CD4-positive, alpha-beta memory T cell (primary cell): ENCODE measurements at regions of chr9 and their contacts with region 1.

Region 1: DNA sequence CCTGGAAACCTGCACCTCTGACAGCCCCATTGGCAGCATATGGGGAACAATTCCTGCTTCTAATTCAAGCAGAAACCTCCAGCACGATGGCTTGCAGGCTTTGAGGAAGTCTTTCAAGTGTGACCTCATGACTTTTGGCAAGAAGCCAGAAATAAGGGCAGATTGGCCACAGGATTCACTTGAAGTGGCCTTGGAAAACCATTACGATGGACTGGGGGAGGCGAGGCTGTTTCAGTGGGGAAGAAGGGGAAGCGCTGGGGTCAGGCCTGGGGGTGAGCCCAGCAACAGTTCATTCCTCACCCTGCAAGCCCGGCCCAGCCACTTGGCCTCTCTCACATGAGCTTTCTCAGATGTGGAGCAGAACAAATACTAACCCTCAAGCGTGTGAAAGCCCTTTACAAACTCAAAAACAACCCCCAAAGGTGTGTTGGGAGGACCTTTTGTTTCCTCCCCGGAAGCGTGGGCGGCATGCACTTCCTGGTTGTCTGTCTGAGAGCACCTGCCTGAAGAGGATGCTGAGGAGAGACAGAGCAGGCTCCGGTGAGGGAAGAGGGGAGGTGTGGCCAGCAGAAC is 26.9 kb upstream of the EEIG1 start:
- DNase-seq: peak; percentile 90 to 97 (median 92)
- H3K4me3 ChIP-seq: peak overlapping the region in 1 of 2 donors; percentile 29
- H3K4me3 Mint-ChIP-seq: peak overlapping the region; percentile 75 to 93 (median 82)
- H3K27ac ChIP-seq: peak overlapping the region; percentile 46
- H3K27ac Mint-ChIP-seq: peak overlapping the region; percentile 94 to 100 (median 97)
- H3K4me1 ChIP-seq: peaks cover 79% of the 10 kb centered on the region
- H3K4me1 Mint-ChIP-seq: peaks cover 33 to 90% (median 61%) of the 10 kb centered on the region in 4 donors
- H3K27me3 ChIP-seq: no peaks in the 10 kb centered on the region
- H3K27me3 Mint-ChIP-seq: no peaks in the 10 kb centered on the region

Region 2: DNA sequence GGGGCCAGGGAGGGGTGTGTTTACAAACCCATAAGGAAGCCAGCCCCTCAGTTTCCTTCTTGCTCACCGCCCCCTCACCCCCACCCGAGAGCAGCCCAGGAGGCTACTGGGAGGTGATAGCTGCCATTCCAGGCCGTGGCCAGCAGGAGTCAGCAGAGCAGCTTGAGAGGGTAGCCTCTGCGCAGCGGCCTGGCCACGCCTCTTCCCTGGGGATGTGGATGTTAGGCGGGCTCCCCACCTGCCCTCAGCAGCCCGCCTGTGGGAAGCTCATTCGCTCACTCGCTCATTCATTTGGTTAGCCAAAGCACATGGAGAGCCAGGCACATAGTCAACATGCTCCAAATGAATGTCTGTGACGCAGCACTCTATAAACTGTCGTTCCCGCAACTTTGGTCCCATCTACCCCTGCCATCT is 63.9 kb before region 1 on chr9:
- CTCF ChIA-PET with region 1: interaction called, 12 read pairs
- POLR2A ChIA-PET with region 1: interaction called, 11 read pairs
- intact Hi-C with region 1: no loop called
- DNase-seq: peak; percentile 66 to 76 (median 72)
- H3K4me3 ChIP-seq: no peak overlapping the region
- H3K4me3 Mint-ChIP-seq: no peak overlapping the region
- H3K27ac ChIP-seq: no peak overlapping the region
- H3K27ac Mint-ChIP-seq: peak overlapping the region; percentile 78 to 93 (median 88)
- H3K4me1 ChIP-seq: peaks cover 30% of the 10 kb centered on the region
- H3K4me1 Mint-ChIP-seq: peaks cover 16 to 50% (median 23%) of the 10 kb centered on the region in 4 donors
- H3K27me3 ChIP-seq: no peaks in the 10 kb centered on the region
- H3K27me3 Mint-ChIP-seq: no peaks in the 10 kb centered on the region

Region 3: GRCh38 chr9:127970401-127971313 is 37.0 kb before region 1 on chr9:
- CTCF ChIA-PET with region 1: interaction called, 3 read pairs
- POLR2A ChIA-PET with region 1: interaction called, 294 read pairs
- intact Hi-C with region 1: loop called (anchors 1 kb)
- DNase-seq: peak; percentile 72 to 89 (median 73)
- H3K4me3 ChIP-seq: peak overlapping the region; percentile 61 to 76
- H3K4me3 Mint-ChIP-seq: peak overlapping the region; percentile 78 to 98 (median 93)
- H3K27ac ChIP-seq: peak overlapping the region; percentile 78
- H3K27ac Mint-ChIP-seq: peak overlapping the region; percentile 81 to 99 (median 97)
- H3K4me1 ChIP-seq: peaks cover 100% of the 10 kb centered on the region
- H3K4me1 Mint-ChIP-seq: peaks cover 73 to 100% (median 87%) of the 10 kb centered on the region in 4 donors
- H3K27me3 ChIP-seq: no peaks in the 10 kb centered on the region
- H3K27me3 Mint-ChIP-seq: no peaks in the 10 kb centered on the region

Region 4: GRCh38 chr9:128020692-128021091 is 13.0 kb after region 1 on chr9:
- CTCF ChIA-PET with region 1: interaction called, 28 read pairs
- POLR2A ChIA-PET with region 1: interaction called, 313 read pairs
- intact Hi-C with region 1: no loop called
- DNase-seq: no peak
- H3K4me3 ChIP-seq: no peak overlapping the region
- H3K4me3 Mint-ChIP-seq: peak overlapping the region in 1 of 8 donors; percentile 77
- H3K27ac ChIP-seq: no peak overlapping the region
- H3K27ac Mint-ChIP-seq: peak overlapping the region; percentile 31 to 100 (median 94)
- H3K4me1 ChIP-seq: peaks cover 55% of the 10 kb centered on the region
- H3K4me1 Mint-ChIP-seq: peaks cover 44 to 71% (median 52%) of the 10 kb centered on the region in 4 donors
- H3K27me3 ChIP-seq: no peaks in the 10 kb centered on the region
- H3K27me3 Mint-ChIP-seq: no peaks in the 10 kb centered on the region